GM10248 (cell line): ENCODE measurements at regions of chr2 and their contacts with region 1.

Region 1: DNA sequence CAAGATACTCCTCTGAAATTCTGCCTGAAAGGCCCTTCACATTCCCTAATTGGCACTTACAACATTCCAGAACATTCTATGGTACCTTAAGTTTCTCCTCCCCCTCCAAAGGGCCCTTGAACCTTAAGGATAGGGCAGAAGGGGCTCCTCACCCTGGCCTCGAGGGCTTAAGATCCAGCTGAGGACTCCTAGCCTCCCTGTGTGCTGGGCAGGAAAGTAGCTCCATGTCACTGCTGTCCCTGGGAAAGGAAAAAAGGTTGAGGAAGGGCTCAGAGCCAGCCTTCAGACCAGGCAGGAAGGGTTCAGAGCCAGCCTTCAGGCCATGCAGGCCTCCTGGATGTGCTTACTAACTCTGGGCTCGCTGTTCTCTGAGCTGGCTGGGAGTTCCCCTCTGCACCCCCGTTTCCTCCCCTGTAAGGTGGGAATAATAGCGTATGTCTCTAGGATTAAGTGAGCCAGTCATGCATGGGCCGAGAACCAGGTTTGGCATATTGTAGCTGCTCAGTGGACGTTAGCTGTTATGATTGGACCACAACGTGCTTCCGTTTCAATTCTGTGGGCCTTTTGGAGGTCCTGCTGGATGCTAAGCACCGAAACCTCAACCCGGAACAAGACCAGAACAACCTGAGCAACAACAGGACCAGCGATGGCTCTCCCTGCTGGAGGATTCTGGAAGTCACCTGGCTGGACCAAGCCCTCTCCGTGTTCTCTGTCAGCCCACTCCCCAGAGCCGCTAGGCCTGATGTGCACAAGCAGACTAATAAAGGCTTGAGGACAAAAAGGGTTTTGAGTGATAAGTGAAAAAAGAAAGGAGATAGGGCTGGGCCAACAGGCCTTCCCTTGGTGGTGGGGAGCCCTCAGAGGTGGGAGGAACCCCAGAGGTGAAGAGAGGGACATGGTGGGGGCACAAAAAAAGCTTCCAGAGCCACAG is 1.0 kb upstream of the B3GNT7 start:
- DNase-seq: peak; percentile 82
- CTCF ChIP-seq: peak; percentile 61

Region 2: DNA sequence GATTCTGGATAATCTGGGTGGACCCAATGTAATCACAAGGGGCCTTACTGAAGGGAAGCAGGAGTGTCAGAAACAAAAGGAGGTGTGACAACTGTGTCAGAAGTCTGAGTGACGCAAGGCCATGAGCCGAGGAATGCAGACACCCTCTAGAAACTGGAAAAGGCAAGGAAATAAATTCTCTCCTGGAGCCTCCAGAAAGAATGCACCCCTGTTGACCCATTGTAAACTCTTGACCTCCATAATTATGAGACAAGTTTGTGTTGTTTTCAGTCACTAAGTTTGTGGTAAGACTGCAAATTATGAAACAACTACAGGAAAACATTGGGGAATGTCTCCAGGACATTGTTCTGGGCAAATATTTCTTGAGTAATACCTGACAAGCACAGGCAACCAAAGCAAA is 46.3 kb before region 1 on chr2:
- CTCF ChIA-PET with region 1: no interaction called
- POLR2A ChIA-PET with region 1: no interaction called
- DNase-seq: no peak
- CTCF ChIP-seq: no peak

Region 3: GRCh38 chr2:231378026-231378722 is 16.3 kb before region 1 on chr2:
- CTCF ChIA-PET with region 1: interaction called, 11 read pairs
- POLR2A ChIA-PET with region 1: no interaction called
- DNase-seq: no peak
- CTCF ChIP-seq: no peak

Region 4: DNA sequence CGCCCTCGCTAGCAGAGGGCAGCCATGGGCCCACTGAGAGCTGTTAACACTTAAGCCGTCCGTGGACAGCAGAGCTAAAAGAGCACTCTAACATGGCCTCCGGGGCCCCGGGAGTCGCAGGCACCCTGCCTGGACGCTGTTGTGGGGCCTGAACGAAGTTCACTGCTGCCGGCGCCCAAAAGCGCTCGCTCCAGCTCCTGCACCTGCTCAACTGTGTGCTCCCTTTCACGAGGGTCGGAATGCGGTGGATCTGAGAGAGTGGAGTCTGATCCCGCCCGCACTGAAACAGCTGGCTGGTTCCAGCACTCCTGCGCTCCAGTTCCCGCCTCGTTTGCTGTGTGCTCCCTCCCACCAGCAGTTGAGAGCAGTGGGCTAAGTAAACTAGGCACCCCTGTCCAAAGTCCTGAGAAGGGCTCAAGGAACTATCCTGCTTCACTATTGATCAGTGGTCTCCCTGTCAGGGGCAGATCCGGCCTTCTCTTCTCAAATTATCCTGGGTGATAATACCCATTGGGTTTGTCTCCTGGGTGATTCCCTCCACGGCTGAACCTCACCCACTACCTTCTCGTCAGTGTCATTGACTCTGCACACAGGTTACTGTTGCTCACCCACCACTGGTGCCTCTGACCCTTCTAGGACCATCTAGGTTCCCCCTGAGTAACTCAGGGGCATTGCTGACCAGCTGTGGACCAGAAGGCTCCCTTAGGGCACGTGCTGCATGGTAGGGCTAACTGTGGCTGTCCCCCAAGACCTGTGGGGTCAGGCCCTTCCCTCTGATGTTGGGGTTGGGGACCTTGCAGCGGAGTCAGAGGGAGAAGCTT is 24.6 kb after region 1 on chr2:
- CTCF ChIA-PET with region 1: no interaction called
- POLR2A ChIA-PET with region 1: no interaction called
- DNase-seq: no peak
- CTCF ChIP-seq: no peak